ENCODE measurements at regions of chr1 and their contacts with region 1.

Region 1: GRCh38 chr1:10867138-10867721 is 70.8 kb upstream of the CASZ1 start:
- DNase-seq: peak in 1 of 2 donors; percentile 42
- ATAC-seq: peak; percentile 67 to 73
- H3K4me3 ChIP-seq: peak overlapping the region; percentile 46 to 60 (median 50)
- H3K27ac ChIP-seq: peak overlapping the region in 1 of 4 donors; percentile 6
- H3K4me1 ChIP-seq: peaks cover 27 to 35% of the 10 kb centered on the region in 2 donors
- H3K27me3 ChIP-seq: peaks cover 0 to 3% (median 2%) of the 10 kb centered on the region in 3 donors
- CTCF ChIP-seq: peak; percentile 30 to 98 (median 96)
- POLR2A ChIP-seq: no peak

Region 2: GRCh38 chr1:10507111-10507879 is 359.9 kb before region 1 on chr1:
- in situ Hi-C with region 1: loop called in 3 of 4 experiments (anchors 5 kb)
- intact Hi-C with region 1: loop called (anchors 1 kb)
- DNase-seq: peak; percentile 56 to 73
- ATAC-seq: peak; percentile 89 to 93
- H3K4me3 ChIP-seq: no peak overlapping the region
- H3K27ac ChIP-seq: no peak overlapping the region
- H3K4me1 ChIP-seq: peaks cover 33 to 34% of the 10 kb centered on the region in 2 donors
- H3K27me3 ChIP-seq: no peaks in the 10 kb centered on the region
- CTCF ChIP-seq: peak; percentile 83 to 90 (median 87)
- POLR2A ChIP-seq: no peak

Region 3: GRCh38 chr1:10514490-10515235 is 352.6 kb before region 1 on chr1:
- in situ Hi-C with region 1: loop called in 3 of 4 experiments (anchors 5 kb)
- intact Hi-C with region 1: loop called (anchors 2 kb)
- DNase-seq: no peak
- ATAC-seq: peak in 1 of 2 donors; percentile 56
- H3K4me3 ChIP-seq: no peak overlapping the region
- H3K27ac ChIP-seq: no peak overlapping the region
- H3K4me1 ChIP-seq: peaks cover 47 to 62% of the 10 kb centered on the region in 2 donors
- H3K27me3 ChIP-seq: no peaks in the 10 kb centered on the region
- CTCF ChIP-seq: peak; percentile 48 to 78 (median 61)
- POLR2A ChIP-seq: no peak

Region 4: DNA sequence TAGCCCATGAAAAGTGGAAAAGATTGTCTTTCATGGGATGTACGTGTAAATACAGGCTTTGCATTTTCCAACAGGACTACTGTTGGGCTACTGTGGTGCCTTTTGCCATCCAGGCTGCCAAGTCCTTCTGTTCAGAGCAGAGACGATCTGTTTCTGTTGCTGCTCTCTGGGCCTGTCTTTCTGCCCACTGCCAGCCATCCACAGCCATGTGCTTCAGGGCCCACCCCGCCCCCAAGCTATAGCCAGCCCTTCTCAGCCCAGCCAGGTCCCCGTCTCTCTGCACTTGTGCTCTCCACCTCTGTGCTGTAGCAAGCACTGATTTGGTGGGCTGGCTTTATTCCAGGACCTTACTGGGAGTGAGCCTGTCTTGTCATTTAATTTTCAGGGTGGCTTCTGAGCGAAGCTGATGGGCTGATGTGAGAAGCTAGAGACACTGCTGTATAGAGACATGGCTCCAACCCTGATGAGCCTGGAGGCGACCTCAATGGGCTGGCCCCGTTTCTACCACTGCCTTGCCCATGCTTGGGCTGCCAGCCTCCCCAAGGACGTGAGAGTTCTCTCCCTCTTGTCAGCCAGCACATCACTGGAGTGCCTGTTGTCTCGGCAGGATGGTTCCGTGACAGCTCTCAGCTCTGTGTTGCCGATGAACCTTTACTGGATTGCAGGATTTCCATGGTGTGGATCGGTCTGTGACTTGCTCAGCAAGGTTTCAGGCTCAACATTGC is 254.6 kb before region 1 on chr1:
- in situ Hi-C with region 1: no loop called
- intact Hi-C with region 1: loop called (anchors 5 kb)
- DNase-seq: no peak
- ATAC-seq: peak in 1 of 2 donors; percentile 18
- H3K4me3 ChIP-seq: no peak overlapping the region
- H3K27ac ChIP-seq: peak overlapping the region; percentile 3 to 73 (median 64)
- H3K4me1 ChIP-seq: peaks cover 5 to 22% of the 10 kb centered on the region in 2 donors
- H3K27me3 ChIP-seq: no peaks in the 10 kb centered on the region
- CTCF ChIP-seq: no peak
- POLR2A ChIP-seq: no peak

Region 5: GRCh38 chr1:10677491-10678391 is 189.5 kb before region 1 on chr1:
- in situ Hi-C with region 1: no loop called
- intact Hi-C with region 1: no loop called
- DNase-seq: peak; percentile 45 to 49
- ATAC-seq: peak in 1 of 2 donors; percentile 37
- H3K4me3 ChIP-seq: no peak overlapping the region
- H3K27ac ChIP-seq: peak overlapping the region; percentile 13 to 65 (median 51)
- H3K4me1 ChIP-seq: peaks cover 58 to 62% of the 10 kb centered on the region in 2 donors
- H3K27me3 ChIP-seq: no peaks in the 10 kb centered on the region
- CTCF ChIP-seq: no peak
- POLR2A ChIP-seq: no peak

Region 6: DNA sequence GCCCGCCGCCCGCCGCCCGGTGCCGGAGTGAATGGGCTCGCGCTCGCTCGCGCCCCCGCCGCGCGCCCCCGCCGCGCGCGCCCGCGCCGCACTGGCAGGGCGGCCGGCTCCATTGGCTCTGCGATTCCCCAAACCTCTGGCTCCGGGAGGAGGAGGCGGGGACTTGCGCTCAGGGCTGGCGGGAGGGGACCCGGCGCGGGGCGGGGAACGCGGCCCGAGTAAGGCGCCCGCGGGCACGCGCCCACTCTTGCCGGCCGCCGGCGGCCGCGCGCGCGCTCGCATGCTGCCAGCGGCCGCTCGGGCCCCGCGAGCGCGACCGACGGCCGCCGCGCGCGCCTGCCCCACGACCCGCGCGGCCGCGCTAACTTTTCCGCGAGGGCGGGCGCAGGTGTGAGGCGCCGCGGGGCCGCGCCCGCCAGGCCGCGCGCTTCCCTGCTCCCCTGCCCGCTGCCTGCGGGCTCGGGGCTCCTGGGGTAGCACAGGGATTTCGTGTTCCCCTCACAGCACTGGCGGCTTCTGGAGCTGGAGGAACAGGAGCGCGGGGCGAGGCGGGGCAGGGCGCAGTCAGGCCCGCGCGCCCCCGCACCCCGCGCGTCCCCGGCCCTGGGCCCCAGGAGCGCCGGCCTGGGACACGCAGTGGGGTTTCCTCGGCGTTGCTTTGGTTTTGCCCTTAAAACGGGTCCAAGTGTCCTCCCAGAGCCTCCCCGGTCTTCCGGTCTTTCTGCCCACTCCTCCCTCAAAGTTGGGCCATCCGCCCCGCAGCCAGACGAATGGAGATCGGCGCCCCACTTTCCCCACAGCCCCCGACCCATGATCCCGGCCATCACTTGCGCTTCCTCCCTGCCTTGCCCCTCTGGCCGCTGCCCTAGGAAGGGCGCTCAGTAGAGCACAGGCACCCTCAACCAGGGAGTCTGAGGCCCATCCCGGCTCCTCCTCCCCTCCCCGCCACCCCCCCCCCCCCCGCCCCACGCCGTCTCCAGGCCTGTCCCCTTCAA is 172.3 kb before region 1 on chr1:
- in situ Hi-C with region 1: no loop called
- intact Hi-C with region 1: loop called (anchors 5 kb)
- DNase-seq: peak; percentile 85 to 90
- ATAC-seq: peak; percentile 75 to 76
- H3K4me3 ChIP-seq: peak overlapping the region; percentile 43 to 72 (median 54)
- H3K27ac ChIP-seq: peak overlapping the region; percentile 82 to 90 (median 86)
- H3K4me1 ChIP-seq: peaks cover 45 to 62% of the 10 kb centered on the region in 2 donors
- H3K27me3 ChIP-seq: no peaks in the 10 kb centered on the region
- CTCF ChIP-seq: no peak
- POLR2A ChIP-seq: peak; percentile 11 to 36

Measured in gastrocnemius medialis (tissue), 4 donors.